ENCODE measurements at regions of chr15 and their contacts with region 1.

Region 1: GRCh38 chr15:52019388-52020220 is 585 bp downstream of the MAPK6 start:
- DNase-seq: peak; percentile 79
- ATAC-seq: peak; percentile 60
- H3K4me3 Mint-ChIP-seq: peak overlapping the region; percentile 98
- H3K27ac Mint-ChIP-seq: peak overlapping the region; percentile 100
- H3K4me1 Mint-ChIP-seq: peaks cover 21% of the 10 kb centered on the region
- H3K27me3 Mint-ChIP-seq: peaks cover 2% of the 10 kb centered on the region

Region 2: DNA sequence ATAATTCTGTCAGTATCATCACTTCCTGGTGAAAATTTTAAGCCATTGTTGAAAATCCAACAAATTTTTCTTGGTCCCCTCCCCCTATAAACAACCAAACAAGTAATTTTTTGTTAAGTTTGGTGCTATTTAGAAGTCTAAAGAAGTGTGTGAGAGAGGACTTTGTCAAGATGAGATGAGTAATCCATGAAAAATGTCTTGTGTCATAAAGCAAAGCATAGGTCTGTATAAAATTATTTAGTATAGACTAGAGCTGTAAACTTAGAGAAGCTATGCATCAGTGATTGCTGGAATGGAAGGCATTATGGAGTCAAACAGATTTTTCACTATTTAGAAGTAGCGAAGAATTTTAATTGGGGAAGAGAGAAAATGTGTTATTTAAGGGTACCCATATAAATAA is 30.8 kb after region 1 on chr15:
- POLR2A ChIA-PET with region 1: interaction called, 14 read pairs
- DNase-seq: no peak
- ATAC-seq: no peak
- H3K4me3 Mint-ChIP-seq: no peak overlapping the region
- H3K27ac Mint-ChIP-seq: no peak overlapping the region
- H3K4me1 Mint-ChIP-seq: peaks cover 18% of the 10 kb centered on the region
- H3K27me3 Mint-ChIP-seq: no peaks in the 10 kb centered on the region